Uterus (tissue), 4 donors: ENCODE measurements at regions of chr20 and their contacts with region 1.

Region 1: DNA sequence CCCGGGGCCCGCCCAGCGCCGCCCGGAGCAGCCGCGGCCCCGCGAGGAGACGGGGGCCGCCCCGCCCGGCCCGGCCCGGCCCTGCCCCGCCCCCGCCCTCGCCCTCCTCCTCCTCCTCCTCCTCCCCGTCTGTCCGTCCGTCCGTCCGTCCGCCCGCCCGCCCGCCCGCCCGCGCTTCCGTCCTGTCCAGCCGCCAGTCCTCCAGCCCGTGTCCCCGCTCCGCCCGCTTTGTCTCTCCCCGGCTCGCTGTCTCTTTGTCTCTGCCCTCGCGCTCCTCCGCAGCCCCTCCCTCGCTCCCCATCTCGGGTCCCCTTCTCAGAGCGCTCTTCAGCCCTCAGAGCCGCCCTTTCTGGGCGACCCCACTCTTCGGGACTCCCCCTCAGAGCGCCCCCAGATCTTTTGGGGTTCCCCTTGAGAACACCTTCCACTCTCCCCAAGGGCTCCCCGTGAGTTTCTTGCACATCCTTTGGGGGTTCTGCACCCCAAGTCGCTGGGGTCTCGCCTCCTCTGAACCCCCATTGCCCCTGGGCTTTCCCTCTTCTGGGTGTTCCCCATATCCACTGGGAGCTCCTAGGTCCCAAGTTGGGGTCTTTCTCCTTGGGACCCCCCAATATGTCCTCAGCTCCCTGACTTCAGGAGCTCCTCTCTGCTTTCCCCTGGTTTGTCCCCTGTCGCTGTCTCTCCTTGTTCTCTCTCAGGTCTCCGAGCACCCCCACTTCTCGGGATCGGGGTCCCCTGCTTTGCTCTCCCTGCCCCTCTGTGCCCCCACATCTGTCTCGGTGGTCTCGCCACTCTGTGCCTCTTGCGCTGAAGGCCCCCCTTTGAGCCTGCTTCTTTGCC is 79.5 kb upstream of the MYL9 start:
- DNase-seq: peak; percentile 61
- H3K4me3 ChIP-seq: peak overlapping the region; percentile 88 to 98
- H3K27ac ChIP-seq: peak overlapping the region; percentile 92 to 94
- H3K4me1 ChIP-seq: peaks cover 4 to 6% of the 10 kb centered on the region in 2 donors
- H3K27me3 ChIP-seq: no peaks in the 10 kb centered on the region
- CTCF ChIP-seq: no peak
- POLR2A ChIP-seq: peak in 1 of 2 donors; percentile 9

Region 2: GRCh38 chr20:36355469-36356171 is 106.2 kb before region 1 on chr20:
- intact Hi-C with region 1: no loop called
- DNase-seq: no peak
- H3K4me3 ChIP-seq: no peak overlapping the region
- H3K27ac ChIP-seq: no peak overlapping the region
- H3K4me1 ChIP-seq: no peaks in the 10 kb centered on the region
- H3K27me3 ChIP-seq: no peaks in the 10 kb centered on the region
- CTCF ChIP-seq: no peak
- POLR2A ChIP-seq: no peak

Region 3: DNA sequence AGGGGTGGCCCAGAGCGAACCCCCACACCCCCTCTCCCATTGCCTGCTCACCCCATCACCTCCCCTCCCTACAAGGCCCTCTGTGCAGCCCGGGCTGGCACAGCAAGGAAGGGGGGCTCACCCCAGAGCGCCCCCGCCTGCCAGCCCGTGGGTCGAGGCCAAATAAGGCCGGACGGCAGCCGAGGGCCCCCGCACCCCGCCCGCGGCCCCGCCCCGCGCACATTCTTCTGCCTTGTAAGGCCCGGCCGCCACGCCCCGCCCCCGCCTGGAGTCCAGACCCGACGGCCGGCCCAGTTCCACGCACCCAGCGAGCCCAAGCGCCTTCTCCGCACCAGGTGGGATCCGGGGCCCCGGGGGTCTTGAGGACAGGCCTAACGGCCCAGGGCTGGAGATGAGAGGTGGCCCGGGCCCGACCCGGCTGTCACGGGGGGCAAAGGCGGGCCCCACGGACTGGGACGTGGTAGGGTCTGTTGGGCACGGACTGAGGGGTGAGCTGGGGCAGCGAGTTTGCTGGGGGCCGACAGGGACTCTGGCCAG is 79.5 kb after region 1 on chr20 and contains the start of gene MYL9:
- intact Hi-C with region 1: loop called (anchors 2 kb)
- DNase-seq: peak; percentile 94 to 97
- H3K4me3 ChIP-seq: peak within 1 kb of the TSS; percentile 78 to 95
- H3K27ac ChIP-seq: peak within 1 kb of the TSS; percentile 97 to 98
- H3K4me1 ChIP-seq: peaks cover 2 to 19% of the 10 kb centered on the region in 2 donors
- H3K27me3 ChIP-seq: no peaks in the 10 kb centered on the region
- CTCF ChIP-seq: no peak
- POLR2A ChIP-seq: peak in 1 of 2 donors; percentile 77
- total RNA-seq, gene MYL9: 18.5 to 1,447 (median 245) TPM